ENCODE measurements at regions of chr16 and their contacts with region 1.

Region 1: GRCh38 chr16:70770626-70771552 is 30.1 kb downstream of the VAC14 start:
- DNase-seq: peak in 2 of 3 donors; percentile 77 to 81
- ATAC-seq: peak; percentile 67 to 78
- H3K4me3 ChIP-seq: no peak overlapping the region
- H3K27ac ChIP-seq: no peak overlapping the region
- H3K4me1 ChIP-seq: peaks cover 2% of the 10 kb centered on the region
- H3K27me3 ChIP-seq: no peaks in the 10 kb centered on the region

Region 2: GRCh38 chr16:70679666-70680494 is 91.0 kb before region 1 on chr16:
- intact Hi-C with region 1: loop called (anchors 2 to 10 kb)
- DNase-seq: peak; percentile 36 to 85 (median 76)
- ATAC-seq: peak in 1 of 2 donors; percentile 34
- H3K4me3 ChIP-seq: no peak overlapping the region
- H3K27ac ChIP-seq: no peak overlapping the region
- H3K4me1 ChIP-seq: peaks cover 9% of the 10 kb centered on the region
- H3K27me3 ChIP-seq: no peaks in the 10 kb centered on the region

Region 3: GRCh38 chr16:70685938-70686375 is 84.9 kb before region 1 on chr16 and contains the start of gene MTSS2:
- intact Hi-C with region 1: loop called in 3 of 4 experiments (anchors 2 to 10 kb)
- DNase-seq: peak; percentile 86 to 95 (median 94)
- ATAC-seq: peak; percentile 57 to 62
- H3K4me3 ChIP-seq: peak within 1 kb of the TSS; percentile 84
- H3K27ac ChIP-seq: peak within 1 kb of the TSS; percentile 66
- H3K4me1 ChIP-seq: peaks cover 35% of the 10 kb centered on the region
- H3K27me3 ChIP-seq: no peaks in the 10 kb centered on the region
- total RNA-seq, gene MTSS2: 60.4 to 71.2 (median 67.7) TPM

Region 4: DNA sequence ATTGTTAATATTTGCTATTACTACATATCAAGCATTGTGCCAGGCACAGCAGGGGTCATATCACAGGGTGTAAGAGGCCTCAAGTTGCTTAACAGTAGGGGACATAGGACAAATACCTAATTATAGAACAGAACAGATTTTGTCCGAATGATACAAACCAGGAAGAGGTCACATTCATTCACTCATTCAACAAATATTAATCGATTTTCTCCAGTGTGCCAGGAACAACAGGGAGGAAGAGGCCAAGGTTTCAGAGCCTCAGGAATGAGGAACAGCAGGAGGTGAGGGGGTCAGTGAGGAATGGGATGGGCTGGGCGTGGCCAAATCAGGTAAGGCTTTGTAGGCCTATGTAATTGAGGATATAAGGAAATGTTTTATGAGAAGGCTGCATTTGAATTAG is 744.1 kb after region 1 on chr16:
- intact Hi-C with region 1: no loop called
- DNase-seq: no peak
- ATAC-seq: no peak
- H3K4me3 ChIP-seq: no peak overlapping the region
- H3K27ac ChIP-seq: no peak overlapping the region
- H3K4me1 ChIP-seq: no peaks in the 10 kb centered on the region
- H3K27me3 ChIP-seq: no peaks in the 10 kb centered on the region